B cell (primary cell): ENCODE measurements at regions of chr15 and their contacts with region 1.

Region 1: DNA sequence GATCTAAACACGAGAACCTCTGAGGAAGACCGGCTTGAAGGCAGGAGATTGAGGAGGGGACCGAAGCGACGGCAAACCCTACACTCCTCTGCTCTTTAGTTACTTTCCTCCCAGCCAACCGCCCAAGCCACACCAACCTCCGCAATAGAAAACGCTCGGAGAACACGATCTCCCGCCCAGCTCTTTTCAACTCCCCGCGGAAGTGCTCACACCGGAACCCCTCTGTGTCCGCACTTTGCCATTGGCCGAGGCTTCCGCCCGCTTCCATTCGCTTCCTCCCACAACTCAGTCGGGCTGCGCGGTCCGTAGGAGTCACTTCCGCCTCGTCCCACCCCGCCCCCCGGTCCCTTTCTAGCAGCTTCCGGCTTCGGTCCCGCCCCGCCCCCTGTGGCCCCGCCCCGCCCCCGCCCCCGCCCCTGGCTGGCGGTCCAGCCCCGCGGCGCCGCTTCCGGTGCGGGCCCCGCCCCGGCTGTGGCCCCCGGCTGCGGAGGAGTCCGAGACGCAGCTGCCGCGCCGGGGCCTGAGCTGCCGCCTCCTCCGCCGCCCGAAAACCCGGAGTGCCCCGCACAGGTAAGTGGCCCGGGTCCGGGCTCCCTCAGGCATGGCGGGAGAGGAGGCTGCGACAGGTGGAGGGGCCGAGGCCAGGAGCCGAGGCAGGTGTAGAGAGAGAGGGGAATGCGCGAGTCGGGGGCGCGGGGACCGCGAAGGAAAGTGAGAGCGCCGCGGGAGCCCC is at the start of gene ARID3B:
- DNase-seq: peak; percentile 96
- ATAC-seq: peak; percentile 90
- H3K4me3 ChIP-seq: peak within 1 kb of the TSS; percentile 79 to 100 (median 93)
- H3K4me3 Mint-ChIP-seq: peak within 1 kb of the TSS; percentile 99
- H3K27ac ChIP-seq: peak within 1 kb of the TSS; percentile 77
- H3K27ac Mint-ChIP-seq: peak within 1 kb of the TSS; percentile 97
- H3K4me1 ChIP-seq: peaks cover 26 to 41% of the 10 kb centered on the region in 2 donors
- H3K4me1 Mint-ChIP-seq: peaks cover 46% of the 10 kb centered on the region
- H3K27me3 ChIP-seq: no peaks in the 10 kb centered on the region
- H3K27me3 Mint-ChIP-seq: no peaks in the 10 kb centered on the region
- CTCF ChIP-seq: no peak
- total RNA-seq, gene ARID3B: 30.9 and 31.0 TPM in 2 replicates

Region 2: DNA sequence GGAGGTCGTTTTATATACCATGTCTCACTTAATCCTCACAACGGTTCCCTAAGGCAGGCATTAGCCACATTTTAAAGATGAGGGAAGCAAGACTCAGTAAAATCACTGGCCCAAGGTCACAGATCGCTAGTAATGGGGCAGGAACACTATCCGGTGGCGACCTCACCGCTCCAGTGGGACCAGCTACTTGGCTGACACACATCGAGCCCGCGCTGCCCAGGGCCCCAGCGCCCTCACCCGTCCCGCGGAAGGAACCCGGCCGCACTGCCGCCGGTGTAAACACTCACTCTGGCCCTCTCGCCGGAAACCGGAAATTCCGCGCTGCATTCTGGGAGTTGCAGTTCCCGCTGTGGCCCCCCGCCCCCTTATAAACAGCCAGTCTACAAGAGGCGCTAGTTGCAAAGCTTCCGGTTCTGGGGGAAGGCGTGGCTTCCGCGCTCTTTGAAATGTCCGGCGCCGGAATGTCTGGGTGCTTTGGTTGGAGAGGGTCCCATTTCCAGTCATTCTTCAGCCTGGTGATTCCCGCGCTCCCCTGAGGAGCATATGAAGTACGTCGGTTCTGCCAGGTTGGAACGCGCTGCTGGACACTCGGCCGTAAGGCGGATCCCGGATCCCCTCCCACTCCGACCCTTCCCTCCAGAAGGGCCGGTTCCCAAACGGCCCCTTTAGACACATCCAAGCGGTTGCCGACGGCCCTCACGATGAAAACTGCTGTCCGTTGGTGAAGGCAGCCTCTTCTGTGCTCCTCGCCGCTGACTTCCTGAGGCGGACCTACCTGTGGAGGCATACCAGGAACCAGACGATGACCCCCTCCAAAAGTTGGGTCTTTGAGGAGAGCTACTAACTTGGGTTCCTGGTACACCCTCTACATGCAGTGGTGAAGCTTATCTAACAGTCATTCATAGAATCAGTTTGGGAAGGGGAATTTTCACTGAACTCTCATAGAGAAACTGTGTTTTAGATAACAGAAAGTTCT is 79.8 kb before region 1 on chr15 and contains the start of gene UBL7:
- CTCF ChIA-PET with region 1: no interaction called
- POLR2A ChIA-PET with region 1: interaction called, 3 read pairs
- intact Hi-C with region 1: loop called (anchors 1 kb)
- DNase-seq: peak; percentile 96
- ATAC-seq: peak; percentile 95
- H3K4me3 ChIP-seq: peak within 1 kb of the TSS; percentile 78 to 99 (median 90)
- H3K4me3 Mint-ChIP-seq: peak within 1 kb of the TSS; percentile 92
- H3K27ac ChIP-seq: peak within 1 kb of the TSS; percentile 77 to 80
- H3K27ac Mint-ChIP-seq: peak within 1 kb of the TSS; percentile 76
- H3K4me1 ChIP-seq: peaks cover 30 to 40% of the 10 kb centered on the region in 2 donors
- H3K4me1 Mint-ChIP-seq: peaks cover 39% of the 10 kb centered on the region
- H3K27me3 ChIP-seq: no peaks in the 10 kb centered on the region
- H3K27me3 Mint-ChIP-seq: no peaks in the 10 kb centered on the region
- CTCF ChIP-seq: no peak
- total RNA-seq, gene UBL7: 44.4 and 50.1 TPM in 2 replicates

Region 3: DNA sequence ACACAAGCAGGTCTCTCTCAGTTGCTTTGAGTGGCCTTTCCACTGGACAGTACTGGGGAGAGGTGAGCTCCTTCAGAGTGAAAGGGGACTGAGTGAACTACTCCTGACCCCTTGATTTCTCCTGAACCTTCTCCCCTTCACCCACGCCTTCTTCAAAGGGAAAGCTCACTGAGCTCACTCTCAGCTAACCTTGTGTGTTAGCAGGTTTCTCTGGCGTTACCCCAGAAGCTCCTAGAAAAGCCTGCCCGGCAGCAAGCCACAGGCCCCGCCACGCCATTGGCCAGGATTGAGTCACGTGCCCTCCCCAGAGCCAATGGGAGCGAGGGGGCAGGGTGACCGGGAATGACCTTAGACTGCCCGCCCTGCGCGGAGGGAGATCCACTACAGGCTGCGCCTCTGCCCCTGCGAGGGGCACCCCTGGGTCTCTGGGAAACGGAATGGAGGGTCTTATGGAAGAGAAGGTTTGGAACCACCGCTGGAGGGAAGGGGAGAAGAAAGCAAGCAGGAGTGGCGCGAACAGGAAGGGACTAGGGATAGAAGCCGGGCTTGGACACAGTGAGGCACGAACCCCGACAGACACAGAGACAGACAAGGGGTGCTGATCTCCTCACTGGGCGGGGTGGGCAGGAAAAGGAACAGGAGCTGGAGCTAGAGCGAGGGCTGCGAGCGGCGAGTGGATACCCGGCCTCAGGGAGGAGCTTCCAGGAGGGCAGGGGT is 57.4 kb after region 1 on chr15:
- CTCF ChIA-PET with region 1: no interaction called
- POLR2A ChIA-PET with region 1: interaction called, 4 read pairs
- intact Hi-C with region 1: loop called (anchors 1 kb)
- DNase-seq: peak; percentile 86
- ATAC-seq: peak; percentile 100
- H3K4me3 ChIP-seq: peak overlapping the region; percentile 71 to 93 (median 79)
- H3K4me3 Mint-ChIP-seq: peak overlapping the region; percentile 100
- H3K27ac ChIP-seq: peak overlapping the region; percentile 68 to 78
- H3K27ac Mint-ChIP-seq: peak overlapping the region; percentile 97
- H3K4me1 ChIP-seq: peaks cover 3 to 15% of the 10 kb centered on the region in 2 donors
- H3K4me1 Mint-ChIP-seq: peaks cover 14% of the 10 kb centered on the region
- H3K27me3 ChIP-seq: no peaks in the 10 kb centered on the region
- H3K27me3 Mint-ChIP-seq: no peaks in the 10 kb centered on the region
- CTCF ChIP-seq: no peak

Region 4: GRCh38 chr15:74695597-74696397 is 154.9 kb after region 1 on chr15 and contains the start of gene EDC3:
- CTCF ChIA-PET with region 1: no interaction called
- POLR2A ChIA-PET with region 1: no interaction called
- intact Hi-C with region 1: loop called (anchors 2 kb)
- DNase-seq: peak; percentile 90
- ATAC-seq: peak; percentile 89
- H3K4me3 ChIP-seq: peak within 1 kb of the TSS; percentile 70 to 95 (median 87)
- H3K4me3 Mint-ChIP-seq: peak within 1 kb of the TSS; percentile 100
- H3K27ac ChIP-seq: peak within 1 kb of the TSS; percentile 63 to 87
- H3K27ac Mint-ChIP-seq: peak within 1 kb of the TSS; percentile 97
- H3K4me1 ChIP-seq: peaks cover 14 to 16% of the 10 kb centered on the region in 2 donors
- H3K4me1 Mint-ChIP-seq: peaks cover 33% of the 10 kb centered on the region
- H3K27me3 ChIP-seq: peaks cover 0 to 3% (median 0%) of the 10 kb centered on the region in 4 experiments
- H3K27me3 Mint-ChIP-seq: no peaks in the 10 kb centered on the region
- CTCF ChIP-seq: no peak
- total RNA-seq, gene EDC3: 47.8 and 55.4 TPM in 2 replicates

Region 5: GRCh38 chr15:75639709-75640482 is 1099.0 kb after region 1 on chr15 and contains the start of gene IMP3:
- CTCF ChIA-PET with region 1: no interaction called
- POLR2A ChIA-PET with region 1: no interaction called
- intact Hi-C with region 1: loop called (anchors 5 kb)
- DNase-seq: peak; percentile 96
- ATAC-seq: peak; percentile 93
- H3K4me3 ChIP-seq: peak within 1 kb of the TSS; percentile 72 to 91 (median 84)
- H3K4me3 Mint-ChIP-seq: peak within 1 kb of the TSS; percentile 95
- H3K27ac ChIP-seq: peak within 1 kb of the TSS; percentile 78 to 81
- H3K27ac Mint-ChIP-seq: peak within 1 kb of the TSS; percentile 96
- H3K4me1 ChIP-seq: peaks cover 29 to 36% of the 10 kb centered on the region in 2 donors
- H3K4me1 Mint-ChIP-seq: peaks cover 40% of the 10 kb centered on the region
- H3K27me3 ChIP-seq: peaks cover 0 to 4% (median 0%) of the 10 kb centered on the region in 4 experiments
- H3K27me3 Mint-ChIP-seq: no peaks in the 10 kb centered on the region
- CTCF ChIP-seq: no peak
- total RNA-seq, gene IMP3: 60.8 and 62.9 TPM in 2 replicates